H1 (cell line): ENCODE measurements at regions of chr7 and their contacts with region 1.

Region 1: GRCh38 chr7:150404805-150405583 is 25.9 kb downstream of the ZNF775 start:
- DNase-seq: peak in 1 of 2 experiments; percentile 88
- H3K4me3 ChIP-seq: peak overlapping the region; percentile 49 to 79 (median 61)
- H3K27ac ChIP-seq: peak overlapping the region; percentile 97
- H3K4me1 ChIP-seq: peaks cover 36 to 58% (median 45%) of the 10 kb centered on the region in 4 experiments
- H3K27me3 ChIP-seq: no peaks in the 10 kb centered on the region
- CTCF ChIP-seq: peak; percentile 1 to 20 (median 5); a peak in 2 of 4 replicates
- EP300 ChIP-seq: peak; percentile 1 to 79; a peak in 2 of 3 replicates
- POLR2A ChIP-seq: peak in 1 of 2 experiments; percentile 31
- RAD21 ChIP-seq: peak in 1 of 2 experiments; percentile 9; a peak in 2 of 4 replicates

Region 2: GRCh38 chr7:150329331-150330120 is 75.5 kb before region 1 on chr7:
- CTCF ChIA-PET with region 1: interaction called, 6 read pairs
- POLR2A ChIA-PET with region 1: interaction called, 15 read pairs
- DNase-seq: peak in 1 of 2 experiments; percentile 66
- H3K4me3 ChIP-seq: no peak overlapping the region; a peak in 2 of 8 replicates
- H3K27ac ChIP-seq: peak overlapping the region; percentile 43; the same call in 1 of the 2 replicates
- H3K4me1 ChIP-seq: peaks cover 10 to 31% (median 23%) of the 10 kb centered on the region in 4 experiments
- H3K27me3 ChIP-seq: 0 out of 7 replicates have a peak, but pooled peaks cover 0 to 2% (median 0%) of the 10 kb centered on the region in 4 experiments
- CTCF ChIP-seq: peak in 2 of 3 experiments; percentile 5 to 18; a peak in 1 of 4 replicates
- EP300 ChIP-seq: no peak; a peak in 1 of 3 replicates
- POLR2A ChIP-seq: peak in 1 of 2 experiments; percentile 36; a peak in 1 of 3 replicates
- RAD21 ChIP-seq: peak; percentile 13 to 38; a peak in 2 of 4 replicates

Region 3: DNA sequence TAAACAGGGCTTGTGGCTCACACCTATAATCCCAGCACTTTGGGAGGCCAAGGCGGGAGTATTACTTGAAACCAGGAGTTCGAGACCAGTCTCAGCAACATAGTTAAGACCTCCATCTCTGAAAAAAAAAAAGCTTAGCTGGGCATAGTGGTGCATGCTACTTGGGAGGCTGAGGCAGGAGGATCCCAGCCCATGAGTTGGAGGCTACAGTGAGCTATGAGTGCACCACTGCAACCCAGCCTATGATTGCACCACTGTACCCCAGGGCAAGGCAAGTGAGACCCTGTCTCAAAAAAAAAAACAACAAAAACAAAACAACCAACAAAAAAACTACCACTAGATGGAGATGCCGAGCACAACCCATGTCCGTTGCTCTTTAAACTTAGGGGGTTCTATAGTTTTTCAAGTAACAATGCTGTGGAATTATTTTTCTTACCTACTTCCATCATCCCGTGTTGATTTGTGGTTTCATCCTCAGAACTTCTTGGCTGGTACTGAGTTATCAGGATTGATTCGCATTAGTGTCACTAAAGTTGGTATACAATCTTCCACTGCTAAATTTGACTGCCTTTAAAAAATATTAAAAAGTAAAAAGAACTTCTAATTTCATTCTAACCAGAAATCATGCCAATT is 48.6 kb before region 1 on chr7:
- CTCF ChIA-PET with region 1: interaction called, 12 read pairs
- POLR2A ChIA-PET with region 1: interaction called, 15 read pairs
- DNase-seq: no peak
- H3K4me3 ChIP-seq: no peak overlapping the region
- H3K27ac ChIP-seq: no peak overlapping the region
- H3K4me1 ChIP-seq: peaks cover 3 to 6% (median 5%) of the 10 kb centered on the region in 4 experiments; a peak in 5 of 7 replicates
- H3K27me3 ChIP-seq: no peaks in the 10 kb centered on the region; a peak in 1 of 7 replicates
- CTCF ChIP-seq: peak in 2 of 3 experiments; percentile 60 to 61; a peak in 3 of 4 replicates
- EP300 ChIP-seq: no peak
- POLR2A ChIP-seq: no peak
- RAD21 ChIP-seq: peak; percentile 60 to 70

Region 4: GRCh38 chr7:150378853-150379440 is 26.0 kb before region 1 on chr7 and contains the start of gene ZNF775:
- CTCF ChIA-PET with region 1: interaction called, 31 read pairs
- POLR2A ChIA-PET with region 1: interaction called, 230 read pairs
- DNase-seq: peak; percentile 89 to 93
- H3K4me3 ChIP-seq: peak within 1 kb of the TSS; percentile 88 to 96 (median 90)
- H3K27ac ChIP-seq: peak within 1 kb of the TSS; percentile 70
- H3K4me1 ChIP-seq: peaks cover 15 to 44% (median 27%) of the 10 kb centered on the region in 4 experiments
- H3K27me3 ChIP-seq: no peaks in the 10 kb centered on the region
- CTCF ChIP-seq: no peak
- EP300 ChIP-seq: no peak
- POLR2A ChIP-seq: peak in 1 of 2 experiments; percentile 79; a peak in 2 of 3 replicates
- RAD21 ChIP-seq: no peak; a peak in 1 of 4 replicates
- total RNA-seq, gene ZNF775: 21.5 and 24.9 TPM in 2 replicates

Region 5: GRCh38 chr7:150420987-150421674 is 16.1 kb after region 1 on chr7:
- CTCF ChIA-PET with region 1: interaction called, 16 read pairs
- POLR2A ChIA-PET with region 1: interaction called, 12 read pairs
- DNase-seq: peak in 1 of 2 experiments; percentile 93
- H3K4me3 ChIP-seq: no peak overlapping the region
- H3K27ac ChIP-seq: no peak overlapping the region
- H3K4me1 ChIP-seq: peaks cover 0 to 3% (median 0%) of the 10 kb centered on the region in 4 experiments; a peak in 2 of 7 replicates
- H3K27me3 ChIP-seq: no peaks in the 10 kb centered on the region
- CTCF ChIP-seq: peak; percentile 80 to 87 (median 81)
- EP300 ChIP-seq: no peak
- POLR2A ChIP-seq: no peak
- RAD21 ChIP-seq: peak; percentile 88 to 90

Region 6: GRCh38 chr7:150703209-150703608 is 298.2 kb after region 1 on chr7:
- CTCF ChIA-PET with region 1: no interaction called
- POLR2A ChIA-PET with region 1: no interaction called
- DNase-seq: no peak
- H3K4me3 ChIP-seq: no peak overlapping the region
- H3K27ac ChIP-seq: no peak overlapping the region
- H3K4me1 ChIP-seq: no peaks in the 10 kb centered on the region
- H3K27me3 ChIP-seq: no peaks in the 10 kb centered on the region
- CTCF ChIP-seq: no peak
- EP300 ChIP-seq: no peak
- POLR2A ChIP-seq: no peak
- RAD21 ChIP-seq: no peak